ENCODE measurements at regions of chr17 and their contacts with region 1.

Region 1: DNA sequence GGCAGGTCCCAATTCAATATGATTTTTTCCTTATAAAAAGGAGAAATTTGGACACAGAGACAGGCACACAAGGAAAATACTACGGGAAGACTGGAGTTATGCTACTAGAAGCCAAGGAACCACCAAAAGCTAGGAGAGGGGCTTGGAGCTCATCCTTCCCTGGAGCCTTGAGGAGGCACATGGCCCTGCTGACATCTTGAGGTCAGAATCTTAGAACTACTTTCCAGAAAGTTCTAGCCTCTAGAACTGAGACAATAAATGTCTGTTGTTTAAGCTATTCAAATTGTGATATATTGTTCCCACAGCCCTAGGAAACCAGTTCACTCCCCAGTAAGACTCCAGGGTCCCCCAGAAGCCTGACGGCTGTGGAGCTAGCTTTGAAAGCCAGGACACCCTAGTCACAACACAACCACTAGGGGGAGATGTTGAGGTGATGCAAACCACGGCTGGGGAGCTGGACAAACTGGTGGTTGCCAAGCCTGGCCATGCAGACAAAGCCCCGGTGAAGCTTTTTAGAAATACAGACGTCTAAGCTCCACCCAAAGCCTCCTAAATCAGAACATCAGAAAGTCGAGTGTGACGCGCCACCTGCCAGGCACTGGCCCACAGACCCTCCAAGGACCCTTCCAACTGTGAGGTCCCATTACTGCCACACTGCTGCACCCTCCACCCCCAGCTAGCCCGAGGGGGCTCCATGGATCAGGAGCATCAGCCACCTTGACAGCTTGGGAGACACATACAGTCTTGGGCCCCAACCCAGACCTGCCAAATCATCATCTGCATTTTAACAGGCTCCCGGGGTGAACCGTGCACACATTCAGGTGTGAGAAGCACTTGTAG is 106.4 kb downstream of the SLC39A11 start:
- DNase-seq: peak; percentile 32
- H3K4me3 Mint-ChIP-seq: no peak overlapping the region
- H3K27ac Mint-ChIP-seq: no peak overlapping the region
- H3K4me1 Mint-ChIP-seq: peaks cover 1% of the 10 kb centered on the region
- H3K27me3 Mint-ChIP-seq: no peaks in the 10 kb centered on the region

Region 2: GRCh38 chr17:73156166-73156840 is 170.2 kb after region 1 on chr17:
- intact Hi-C with region 1: loop called (anchors 1 kb)
- DNase-seq: peak; percentile 48
- H3K4me3 Mint-ChIP-seq: no peak overlapping the region
- H3K27ac Mint-ChIP-seq: no peak overlapping the region
- H3K4me1 Mint-ChIP-seq: peaks cover 14% of the 10 kb centered on the region
- H3K27me3 Mint-ChIP-seq: peaks cover 20% of the 10 kb centered on the region